Activated T-helper 1 cell treated with anti-CD3 and anti-CD28 coated beads, Interleukin-12 subunit alpha, Interleukin-12 subunit beta, Interleukin-2, Interleukin-4 antibody, amounts not matched to agents 30 ng/mL and 10 ng/mL and 1 ng/mL, durations not matched to agents 14 hours and 24 hours and 36 hours (primary cell): ENCODE measurements at regions of chr15 and their contacts with region 1.

Region 1: GRCh38 chr15:89243691-89244471 is at the start of gene FANCI:
- DNase-seq: peak; percentile 95
- H3K4me3 Mint-ChIP-seq: peak within 1 kb of the TSS; percentile 96
- H3K27ac Mint-ChIP-seq: peak within 1 kb of the TSS; percentile 90
- H3K4me1 Mint-ChIP-seq: peaks cover 53% of the 10 kb centered on the region
- H3K27me3 Mint-ChIP-seq: peaks cover 9% of the 10 kb centered on the region
- total RNA-seq, gene FANCI: 167 and 172 TPM in 2 replicates

Region 2: DNA sequence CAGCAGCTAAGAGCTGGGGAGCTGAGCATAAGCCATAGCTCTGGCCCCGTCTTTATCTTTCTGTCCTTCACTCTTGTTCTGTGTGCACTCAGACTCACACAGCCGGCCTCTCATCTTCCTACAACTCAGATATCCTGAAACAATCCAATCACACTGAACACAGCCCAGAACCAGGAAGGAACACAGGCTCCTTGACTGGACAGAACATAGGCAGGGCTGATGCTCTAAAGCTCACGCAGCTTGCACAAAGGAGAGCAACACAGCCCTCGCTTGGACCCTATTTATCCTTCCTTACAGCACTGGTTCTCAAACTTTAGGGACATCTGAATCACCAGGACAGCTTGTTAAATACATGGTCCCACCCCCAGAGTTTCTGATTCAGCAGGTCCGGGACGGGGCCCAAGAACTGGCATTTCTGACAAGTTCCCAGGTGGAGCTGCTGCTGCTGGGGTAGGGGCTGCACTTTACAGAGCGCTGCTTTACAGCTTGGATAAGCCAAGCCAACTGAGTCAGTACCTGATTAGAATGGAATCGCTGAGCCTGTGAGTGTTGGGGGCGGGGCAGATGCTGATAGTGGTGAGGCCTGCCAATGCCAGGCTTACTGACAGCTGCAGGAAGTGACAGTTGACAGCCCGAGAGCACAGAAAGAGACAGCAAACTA is 841.8 kb before region 1 on chr15:
- intact Hi-C with region 1: no loop called
- DNase-seq: no peak
- H3K4me3 Mint-ChIP-seq: no peak overlapping the region
- H3K27ac Mint-ChIP-seq: no peak overlapping the region
- H3K4me1 Mint-ChIP-seq: no peaks in the 10 kb centered on the region
- H3K27me3 Mint-ChIP-seq: peaks cover 5% of the 10 kb centered on the region

Region 3: DNA sequence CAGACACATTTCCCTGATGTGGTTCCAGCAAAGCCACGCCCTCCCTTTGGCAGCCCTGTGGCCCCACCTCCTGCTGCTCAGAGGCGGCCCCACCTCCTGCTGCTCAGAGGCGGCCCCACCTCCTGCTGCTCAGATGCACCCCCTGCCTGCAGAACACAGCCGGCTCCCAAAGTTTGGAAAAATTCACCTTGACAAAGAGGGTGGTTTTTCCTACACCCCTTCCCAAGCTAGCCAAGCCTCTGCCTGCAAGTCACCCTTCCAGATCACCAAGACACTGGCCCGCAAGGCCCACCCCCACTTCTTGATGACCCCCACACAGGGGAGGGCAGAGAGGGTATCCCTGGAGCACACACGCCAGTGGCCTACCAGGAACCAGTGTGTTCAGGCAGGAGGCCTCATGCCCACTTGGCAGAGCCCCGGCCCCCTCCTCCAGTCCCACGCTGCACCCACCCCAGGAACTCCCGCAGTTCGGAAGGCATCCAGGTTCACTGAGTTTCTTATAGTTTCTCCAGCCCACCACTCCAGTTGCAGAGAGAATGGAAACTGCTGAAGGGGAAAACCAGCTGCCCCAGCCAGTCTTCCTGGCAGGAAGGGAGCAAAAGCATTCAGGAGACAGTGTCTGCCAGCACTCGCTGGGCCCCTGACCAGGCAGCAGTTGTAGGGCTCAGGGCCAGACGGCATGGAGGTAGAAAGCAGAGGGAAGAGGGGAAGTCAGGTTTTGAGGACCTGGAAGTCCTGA is 346.3 kb before region 1 on chr15:
- intact Hi-C with region 1: loop called (anchors 10 kb)
- DNase-seq: peak; percentile 78
- H3K4me3 Mint-ChIP-seq: no peak overlapping the region
- H3K27ac Mint-ChIP-seq: no peak overlapping the region
- H3K4me1 Mint-ChIP-seq: peaks cover 35% of the 10 kb centered on the region
- H3K27me3 Mint-ChIP-seq: no peaks in the 10 kb centered on the region

Region 4: GRCh38 chr15:88913017-88913849 is 330.6 kb before region 1 on chr15 and contains the start of gene MFGE8:
- intact Hi-C with region 1: loop called (anchors 1 kb)
- DNase-seq: peak; percentile 71
- H3K4me3 Mint-ChIP-seq: peak within 1 kb of the TSS; percentile 93
- H3K27ac Mint-ChIP-seq: peak within 1 kb of the TSS; percentile 77
- H3K4me1 Mint-ChIP-seq: peaks cover 28% of the 10 kb centered on the region
- H3K27me3 Mint-ChIP-seq: peaks cover 12% of the 10 kb centered on the region
- total RNA-seq, gene MFGE8: 7.9 and 10.6 TPM in 2 replicates

Region 5: DNA sequence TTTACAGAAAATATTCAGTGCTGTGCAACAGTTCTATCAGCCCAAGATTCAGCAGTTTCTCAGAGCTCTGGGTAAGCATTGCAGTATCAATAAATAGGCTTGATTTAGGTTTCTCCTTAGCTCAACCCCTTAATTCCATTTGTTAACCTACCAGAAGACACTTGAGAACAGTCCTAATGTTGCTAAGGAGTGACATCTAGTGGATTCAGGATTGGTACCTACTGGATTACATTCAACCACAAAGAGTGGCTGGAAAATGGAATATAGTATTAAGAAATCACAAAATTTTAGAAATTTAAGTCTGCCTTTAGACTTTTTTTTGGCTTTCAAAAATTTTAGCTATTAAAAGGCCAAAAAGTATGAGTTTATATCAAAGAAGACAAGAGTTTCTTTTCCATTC is 56.0 kb after region 1 on chr15:
- intact Hi-C with region 1: loop called (anchors 2 kb)
- DNase-seq: no peak
- H3K4me3 Mint-ChIP-seq: no peak overlapping the region
- H3K27ac Mint-ChIP-seq: no peak overlapping the region
- H3K4me1 Mint-ChIP-seq: peaks cover 58% of the 10 kb centered on the region
- H3K27me3 Mint-ChIP-seq: no peaks in the 10 kb centered on the region

Region 6: DNA sequence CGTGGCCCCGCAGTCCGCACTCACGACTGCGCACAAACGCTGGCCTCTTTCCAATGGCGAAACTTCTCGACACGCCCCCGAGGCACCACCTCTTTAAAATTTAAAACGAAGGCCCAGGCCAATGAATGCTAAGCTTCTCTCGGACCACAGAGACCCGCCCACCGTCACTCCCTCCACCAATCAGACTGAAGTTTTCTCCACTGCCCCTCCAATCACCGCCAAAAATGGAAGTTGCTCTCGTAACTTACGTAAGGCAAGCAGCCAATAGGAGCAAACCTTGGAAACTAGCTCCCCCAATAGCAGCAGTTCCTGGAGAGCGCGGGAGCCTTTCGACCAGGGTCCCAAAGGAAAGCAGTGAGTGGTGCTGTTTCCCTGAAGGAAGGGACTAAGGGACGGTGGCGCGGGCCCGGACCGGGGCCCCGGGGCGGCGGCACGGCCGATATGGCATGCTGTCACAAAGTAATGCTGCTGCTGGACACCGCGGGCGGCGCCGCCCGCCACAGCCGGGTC is 331.3 kb after region 1 on chr15 and contains the start of gene TICRR:
- intact Hi-C with region 1: loop called (anchors 1 kb)
- DNase-seq: peak; percentile 97
- H3K4me3 Mint-ChIP-seq: peak within 1 kb of the TSS; percentile 94
- H3K27ac Mint-ChIP-seq: peak within 1 kb of the TSS; percentile 91
- H3K4me1 Mint-ChIP-seq: peaks cover 30% of the 10 kb centered on the region
- H3K27me3 Mint-ChIP-seq: peaks cover 16% of the 10 kb centered on the region
- total RNA-seq, gene TICRR: 17.6 and 19.2 TPM in 2 replicates